GM10248 (cell line): ENCODE measurements at regions of chr6 and their contacts with region 1.

Region 1: DNA sequence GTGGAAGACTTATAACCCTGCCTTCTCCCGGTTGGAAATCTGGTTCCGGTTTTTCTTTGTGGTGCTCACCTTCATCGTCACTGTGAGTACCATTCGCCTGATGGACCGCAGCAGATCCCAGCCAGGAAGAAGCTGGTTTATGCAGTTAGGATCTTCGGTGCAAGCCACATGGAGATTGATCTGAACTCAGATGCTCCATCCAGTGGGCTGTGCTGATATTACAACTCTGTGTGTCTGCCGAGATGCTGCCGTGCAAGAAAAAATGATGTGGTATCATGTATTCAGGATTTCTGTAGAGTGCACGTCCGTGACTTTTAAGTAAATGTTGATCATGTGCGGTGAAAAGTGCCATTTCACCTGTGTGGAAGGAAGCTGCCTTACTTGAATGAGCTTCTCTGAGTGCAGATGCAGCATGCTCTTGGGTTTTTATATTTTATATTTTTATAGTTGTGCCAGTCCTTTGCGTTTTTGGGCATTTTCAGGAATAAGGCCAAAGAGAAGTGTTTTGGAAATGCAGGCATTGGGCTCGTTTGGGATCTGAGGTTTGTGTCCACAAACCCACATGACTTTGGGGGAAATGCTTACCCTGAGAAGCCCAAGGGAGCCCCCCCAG is 39.2 kb downstream of the DYNLT1 start:
- DNase-seq: peak; percentile 72
- CTCF ChIP-seq: peak; percentile 70

Region 2: GRCh38 chr6:158595223-158595622 is 10.1 kb before region 1 on chr6:
- CTCF ChIA-PET with region 1: interaction called, 21 read pairs
- POLR2A ChIA-PET with region 1: no interaction called
- DNase-seq: no peak
- CTCF ChIP-seq: no peak